B cell (primary cell): ENCODE measurements at regions of chr19 and their contacts with region 1.

Region 1: GRCh38 chr19:49512970-49513745 is 697 bp downstream of the FCGRT start:
- DNase-seq: peak; percentile 64
- ATAC-seq: peak; percentile 73
- H3K4me3 ChIP-seq: peak overlapping the region; percentile 44 to 84 (median 79)
- H3K4me3 Mint-ChIP-seq: peak overlapping the region; percentile 91
- H3K27ac ChIP-seq: peak overlapping the region; percentile 64 to 79
- H3K27ac Mint-ChIP-seq: peak overlapping the region; percentile 88
- H3K4me1 ChIP-seq: peaks cover 26 to 34% of the 10 kb centered on the region in 2 donors
- H3K4me1 Mint-ChIP-seq: peaks cover 40% of the 10 kb centered on the region
- H3K27me3 ChIP-seq: no peaks in the 10 kb centered on the region
- H3K27me3 Mint-ChIP-seq: no peaks in the 10 kb centered on the region
- CTCF ChIP-seq: no peak

Region 2: DNA sequence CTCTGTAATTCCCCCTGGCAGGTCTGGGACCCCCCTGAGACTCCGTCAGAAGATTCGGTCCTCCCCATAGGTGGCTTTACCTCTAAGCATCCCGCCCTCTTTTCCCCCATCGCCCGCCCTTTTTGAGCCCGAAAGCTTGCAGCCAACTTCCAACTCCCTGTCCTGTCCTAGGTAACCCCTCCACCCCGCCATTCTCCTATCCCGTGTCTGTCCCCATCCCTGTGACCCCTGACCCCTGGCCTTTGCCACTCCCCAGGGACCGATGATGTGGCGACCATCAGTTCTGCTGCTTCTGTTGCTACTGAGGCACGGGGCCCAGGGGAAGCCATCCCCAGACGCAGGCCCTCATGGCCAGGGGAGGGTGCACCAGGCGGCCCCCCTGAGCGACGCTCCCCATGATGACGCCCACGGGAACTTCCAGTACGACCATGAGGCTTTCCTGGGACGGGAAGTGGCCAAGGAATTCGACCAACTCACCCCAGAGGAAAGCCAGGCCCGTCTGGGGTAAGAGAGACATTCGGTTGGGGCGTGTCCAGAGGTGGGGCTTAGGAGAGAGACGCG is 15.1 kb after region 1 on chr19:
- CTCF ChIA-PET with region 1: interaction called, 4 read pairs
- POLR2A ChIA-PET with region 1: interaction called, 5 read pairs
- intact Hi-C with region 1: loop called (anchors 2 kb)
- DNase-seq: no peak
- ATAC-seq: no peak
- H3K4me3 ChIP-seq: peak overlapping the region in 4 of 5 experiments; percentile 33 to 49 (median 44)
- H3K4me3 Mint-ChIP-seq: peak overlapping the region; percentile 84
- H3K27ac ChIP-seq: no peak overlapping the region
- H3K27ac Mint-ChIP-seq: no peak overlapping the region
- H3K4me1 ChIP-seq: peaks cover 3 to 16% of the 10 kb centered on the region in 2 donors
- H3K4me1 Mint-ChIP-seq: peaks cover 18% of the 10 kb centered on the region
- H3K27me3 ChIP-seq: peaks cover 0 to 3% (median under 1%) of the 10 kb centered on the region in 4 experiments
- H3K27me3 Mint-ChIP-seq: no peaks in the 10 kb centered on the region
- CTCF ChIP-seq: no peak